ENCODE measurements at regions of chr6 and their contacts with region 1.

Region 1: GRCh38 chr6:20630617-20631548 is 96.6 kb downstream of the CDKAL1 start:
- DNase-seq: no peak
- ATAC-seq: no peak
- H3K4me3 ChIP-seq: no peak overlapping the region
- H3K27ac ChIP-seq: no peak overlapping the region
- H3K4me1 ChIP-seq: peaks cover 3% of the 10 kb centered on the region
- H3K27me3 ChIP-seq: no peaks in the 10 kb centered on the region

Region 2: DNA sequence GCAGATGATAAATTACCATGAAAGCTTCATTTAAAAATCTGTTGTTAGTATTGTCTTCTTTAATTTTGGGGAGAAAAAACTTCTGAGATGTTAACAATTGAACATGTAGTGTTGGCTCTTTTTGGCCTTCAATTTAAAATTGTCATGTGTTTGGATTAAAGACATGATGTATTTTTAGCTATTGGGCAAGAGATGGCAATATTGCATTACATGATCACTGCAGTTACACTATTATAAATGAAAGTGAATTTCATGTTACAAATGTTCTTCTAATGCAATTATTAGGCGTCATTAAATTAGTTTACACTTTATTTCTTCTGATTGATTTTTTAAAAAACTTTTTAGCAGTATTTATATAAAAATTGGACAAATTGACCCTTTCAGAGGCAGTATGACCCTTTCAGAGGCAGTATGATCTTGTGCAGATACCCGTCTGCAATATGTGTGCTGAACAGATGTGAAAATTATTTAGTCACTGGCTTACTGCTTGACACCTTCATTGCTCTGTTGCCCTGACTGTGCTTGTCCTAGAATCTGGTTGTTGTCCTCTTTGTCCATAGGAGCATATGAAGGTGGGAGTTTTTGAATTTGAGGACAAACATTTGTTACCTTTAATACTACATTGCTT is 70.8 kb before region 1 on chr6:
- intact Hi-C with region 1: no loop called
- DNase-seq: no peak
- ATAC-seq: no peak
- H3K4me3 ChIP-seq: no peak overlapping the region
- H3K27ac ChIP-seq: no peak overlapping the region
- H3K4me1 ChIP-seq: no peaks in the 10 kb centered on the region
- H3K27me3 ChIP-seq: no peaks in the 10 kb centered on the region

Region 3: DNA sequence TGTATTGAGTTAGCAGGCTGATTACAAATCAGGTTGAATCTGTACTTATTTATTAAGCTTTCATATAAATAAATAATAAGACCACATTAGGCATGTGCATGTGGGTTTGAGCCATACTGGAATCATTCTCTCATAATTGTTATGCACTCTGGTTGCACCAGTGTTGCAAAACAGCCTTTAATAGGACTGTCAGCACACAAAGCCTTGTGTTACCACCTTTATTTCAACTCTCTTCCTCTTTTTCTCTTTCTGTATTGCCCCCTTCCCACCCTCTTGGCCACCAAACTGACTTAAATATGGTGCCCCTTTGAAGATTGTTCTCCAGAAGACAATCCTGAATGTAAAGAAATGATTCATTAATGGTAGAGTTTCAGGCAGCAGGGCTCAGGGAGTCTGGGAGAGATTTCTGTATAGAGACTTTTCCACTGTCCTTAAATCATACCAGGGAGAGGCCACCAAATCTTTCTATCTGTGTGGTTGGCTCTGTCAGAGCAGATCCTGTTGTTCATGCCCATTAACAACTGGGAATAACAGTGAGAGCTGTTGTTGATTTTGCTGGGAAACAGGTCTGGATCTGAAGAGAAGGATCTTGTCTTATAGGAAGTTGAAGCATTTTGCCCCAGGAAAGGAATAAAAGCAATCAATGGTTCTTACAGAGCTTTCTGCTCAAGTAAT is 831.1 kb after region 1 on chr6:
- intact Hi-C with region 1: loop called in 1 of 4 experiments (anchors 10 kb)
- DNase-seq: no peak
- ATAC-seq: no peak
- H3K4me3 ChIP-seq: no peak overlapping the region
- H3K27ac ChIP-seq: no peak overlapping the region
- H3K4me1 ChIP-seq: no peaks in the 10 kb centered on the region
- H3K27me3 ChIP-seq: no peaks in the 10 kb centered on the region